Activated B cell treated with CpG ODN at 0.5 μM for 24 hours (primary cell): ENCODE measurements at regions of chr14 and their contacts with region 1.

Region 1: GRCh38 chr14:102235275-102235897 is 69.6 kb downstream of the MOK start:
- DNase-seq: peak; percentile 52
- ATAC-seq: peak; percentile 99
- H3K4me3 Mint-ChIP-seq: no peak overlapping the region
- H3K27ac Mint-ChIP-seq: no peak overlapping the region
- H3K4me1 Mint-ChIP-seq: no peaks in the 10 kb centered on the region
- H3K27me3 Mint-ChIP-seq: no peaks in the 10 kb centered on the region
- CTCF ChIP-seq: peak; percentile 37

Region 2: GRCh38 chr14:102509744-102510615 is 274.6 kb after region 1 on chr14 and contains the start of gene ANKRD9:
- CTCF ChIA-PET with region 1: no interaction called
- POLR2A ChIA-PET with region 1: no interaction called
- intact Hi-C with region 1: loop called (anchors 10 kb)
- DNase-seq: peak; percentile 81
- ATAC-seq: peak; percentile 82
- H3K4me3 Mint-ChIP-seq: peak within 1 kb of the TSS; percentile 82
- H3K27ac Mint-ChIP-seq: no peak within 1 kb of the TSS
- H3K4me1 Mint-ChIP-seq: peaks cover 11% of the 10 kb centered on the region
- H3K27me3 Mint-ChIP-seq: peaks cover 3% of the 10 kb centered on the region
- CTCF ChIP-seq: no peak
- total RNA-seq, gene ANKRD9: 1.4 and 1.8 TPM in 2 replicates